GM13977 (cell line): ENCODE measurements at regions of chr4 and their contacts with region 1.

Region 1: DNA sequence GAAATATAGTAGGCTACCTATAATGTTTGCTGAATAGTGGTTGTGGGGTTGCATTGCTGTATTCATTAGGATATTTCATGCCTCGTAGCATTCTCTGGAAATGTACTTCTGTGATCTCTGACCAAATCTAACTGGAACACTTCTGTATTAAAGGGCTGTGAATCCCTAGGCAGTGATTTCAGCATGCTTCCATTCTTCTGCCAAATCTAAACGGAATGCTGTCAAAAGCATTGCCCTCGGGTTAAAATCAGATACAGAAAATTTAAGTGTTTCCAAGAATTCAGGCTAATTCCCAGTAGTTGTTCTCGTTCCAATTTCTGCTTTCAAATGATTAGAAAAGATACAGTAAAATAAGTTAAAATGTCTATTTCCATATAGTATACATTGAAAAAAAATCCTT is 1847.5 kb upstream of the IGFBP7 start:
- DNase-seq: no peak
- CTCF ChIP-seq: no peak

Region 2: DNA sequence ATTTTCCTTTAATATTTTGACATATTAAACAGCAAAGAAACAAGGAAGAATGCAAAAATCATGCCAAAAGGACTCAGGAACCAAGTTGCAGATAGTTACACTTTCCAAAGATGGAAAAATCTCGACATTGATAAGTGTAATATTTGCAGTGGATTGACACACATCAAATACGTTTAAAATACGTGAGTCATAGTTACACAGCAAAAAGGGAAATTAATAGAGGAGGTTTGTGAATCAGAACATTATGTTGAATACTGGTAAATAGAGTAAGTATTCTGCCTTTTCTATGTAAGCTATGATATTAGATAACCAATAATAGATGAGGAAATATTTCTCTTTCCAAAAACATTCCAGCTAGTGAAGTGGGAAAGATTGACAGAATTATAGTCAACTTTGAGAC is 86.2 kb before region 1 on chr4:
- in situ Hi-C with region 1: loop called (anchors 25 kb)
- DNase-seq: no peak
- CTCF ChIP-seq: no peak